Upper lobe of right lung (tissue), 1 donor: ENCODE measurements at regions of chr19 and their contacts with region 1.

Region 1: GRCh38 chr19:2653710-2654707 is 48.5 kb downstream of the GNG7 start:
- DNase-seq: no peak
- ATAC-seq: no peak
- H3K4me3 ChIP-seq: no peak overlapping the region
- H3K27ac ChIP-seq: no peak overlapping the region
- H3K4me1 ChIP-seq: no peaks in the 10 kb centered on the region
- H3K27me3 ChIP-seq: no peaks in the 10 kb centered on the region
- CTCF ChIP-seq: no peak

Region 2: GRCh38 chr19:2722541-2723344 is 68.7 kb after region 1 on chr19:
- intact Hi-C with region 1: loop called (anchors 10 kb)
- DNase-seq: peak; percentile 85
- ATAC-seq: peak; percentile 85
- H3K4me3 ChIP-seq: no peak overlapping the region
- H3K27ac ChIP-seq: no peak overlapping the region
- H3K4me1 ChIP-seq: peaks cover 9% of the 10 kb centered on the region
- H3K27me3 ChIP-seq: peaks cover 51% of the 10 kb centered on the region
- CTCF ChIP-seq: no peak